ENCODE measurements at regions of chr12 and their contacts with region 1.

Region 1: GRCh38 chr12:11486623-11487444 is 91.5 kb upstream of the PRB2 start:
- DNase-seq: no peak
- H3K4me3 ChIP-seq: no peak overlapping the region
- H3K27ac ChIP-seq: no peak overlapping the region
- H3K4me1 ChIP-seq: no peaks in the 10 kb centered on the region
- H3K27me3 ChIP-seq: no peaks in the 10 kb centered on the region
- CTCF ChIP-seq: peak; percentile 69 to 94 (median 91)
- POLR2A ChIP-seq: no peak

Region 2: DNA sequence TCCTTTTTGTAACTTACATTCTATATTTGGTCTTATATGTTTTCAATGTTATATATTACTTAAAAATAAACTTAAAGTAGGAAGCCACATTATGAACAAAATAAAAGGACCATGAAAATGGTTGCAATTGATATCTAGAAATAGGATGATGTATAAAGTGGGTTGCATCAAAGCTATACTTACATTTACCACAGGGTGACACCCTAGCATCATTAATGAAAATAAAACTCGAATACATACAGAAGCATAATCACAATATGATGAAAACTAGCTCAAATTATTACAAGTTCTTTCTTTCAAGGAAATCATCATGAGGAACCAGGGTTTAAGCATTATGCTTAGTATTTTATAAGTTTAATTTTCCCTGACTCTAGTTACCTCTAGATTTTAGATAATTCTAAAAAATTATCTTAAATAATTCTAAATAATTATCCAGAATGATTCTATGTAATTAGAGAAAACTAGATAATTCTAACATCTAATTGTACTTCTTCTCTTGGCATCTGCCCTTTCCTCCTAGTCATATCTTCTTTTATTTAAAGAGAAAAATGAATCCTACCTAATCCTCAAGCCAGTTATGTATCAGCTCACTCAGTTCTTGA is 715.6 kb before region 1 on chr12:
- intact Hi-C with region 1: loop called (anchors 10 kb)
- DNase-seq: no peak
- H3K4me3 ChIP-seq: no peak overlapping the region
- H3K27ac ChIP-seq: no peak overlapping the region
- H3K4me1 ChIP-seq: no peaks in the 10 kb centered on the region
- H3K27me3 ChIP-seq: no peaks in the 10 kb centered on the region
- CTCF ChIP-seq: peak; percentile 53 to 82 (median 71)
- POLR2A ChIP-seq: no peak

Region 3: DNA sequence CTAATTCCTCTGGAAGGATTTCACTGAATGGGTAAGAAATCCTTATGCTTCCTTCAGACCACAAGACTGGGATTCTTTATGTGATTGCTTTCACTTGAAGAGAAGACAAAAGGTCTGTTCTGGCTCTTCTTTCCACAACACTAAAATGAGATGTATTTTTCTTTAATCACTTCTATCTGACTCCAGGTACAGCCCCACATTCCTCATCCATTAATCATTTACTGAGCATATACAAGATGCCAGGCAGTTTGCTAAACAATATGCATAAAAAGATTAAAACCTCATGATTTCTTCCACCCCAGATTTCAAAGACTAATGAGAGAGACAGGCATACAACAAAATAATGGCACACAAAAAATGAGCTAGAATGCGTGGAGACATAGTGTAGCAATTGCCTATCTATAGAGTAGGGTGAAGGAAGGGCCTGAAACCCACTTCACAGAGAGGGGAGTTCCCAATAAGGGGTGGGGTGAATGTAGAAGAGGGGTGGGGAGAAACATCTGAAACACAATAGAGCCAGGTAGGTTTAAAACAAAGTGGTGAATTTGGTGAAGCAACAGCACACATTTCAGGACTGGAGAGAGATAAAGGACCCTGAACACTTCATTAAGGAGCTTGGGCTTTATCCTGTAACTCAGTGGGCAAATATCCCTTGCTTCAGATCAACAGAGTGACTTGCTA is 26.4 kb before region 1 on chr12:
- intact Hi-C with region 1: no loop called
- DNase-seq: no peak
- H3K4me3 ChIP-seq: no peak overlapping the region
- H3K27ac ChIP-seq: no peak overlapping the region
- H3K4me1 ChIP-seq: no peaks in the 10 kb centered on the region
- H3K27me3 ChIP-seq: no peaks in the 10 kb centered on the region
- CTCF ChIP-seq: no peak
- POLR2A ChIP-seq: no peak

Region 4: GRCh38 chr12:11513288-11513687 is 26.5 kb after region 1 on chr12:
- intact Hi-C with region 1: no loop called
- DNase-seq: no peak
- H3K4me3 ChIP-seq: no peak overlapping the region
- H3K27ac ChIP-seq: no peak overlapping the region
- H3K4me1 ChIP-seq: no peaks in the 10 kb centered on the region
- H3K27me3 ChIP-seq: no peaks in the 10 kb centered on the region
- CTCF ChIP-seq: no peak
- POLR2A ChIP-seq: no peak